ENCODE measurements at regions of chr16 and their contacts with region 1.

Region 1: GRCh38 chr16:66751303-66751991 is at the start of gene DYNC1LI2:
- DNase-seq: peak; percentile 63 to 90 (median 78)
- ATAC-seq: peak; percentile 96
- H3K4me3 ChIP-seq: peak within 1 kb of the TSS; percentile 70 to 90
- H3K4me3 Mint-ChIP-seq: peak within 1 kb of the TSS; percentile 87
- H3K27ac ChIP-seq: peak within 1 kb of the TSS; percentile 67 to 79
- H3K27ac Mint-ChIP-seq: peak within 1 kb of the TSS; percentile 94
- H3K4me1 ChIP-seq: peaks cover 32% of the 10 kb centered on the region
- H3K4me1 Mint-ChIP-seq: peaks cover 43% of the 10 kb centered on the region
- H3K27me3 ChIP-seq: no peaks in the 10 kb centered on the region
- H3K27me3 Mint-ChIP-seq: peaks cover 11% of the 10 kb centered on the region
- CTCF ChIP-seq: peak; percentile 76
- total RNA-seq, gene DYNC1LI2: 102 to 114 TPM

Region 2: DNA sequence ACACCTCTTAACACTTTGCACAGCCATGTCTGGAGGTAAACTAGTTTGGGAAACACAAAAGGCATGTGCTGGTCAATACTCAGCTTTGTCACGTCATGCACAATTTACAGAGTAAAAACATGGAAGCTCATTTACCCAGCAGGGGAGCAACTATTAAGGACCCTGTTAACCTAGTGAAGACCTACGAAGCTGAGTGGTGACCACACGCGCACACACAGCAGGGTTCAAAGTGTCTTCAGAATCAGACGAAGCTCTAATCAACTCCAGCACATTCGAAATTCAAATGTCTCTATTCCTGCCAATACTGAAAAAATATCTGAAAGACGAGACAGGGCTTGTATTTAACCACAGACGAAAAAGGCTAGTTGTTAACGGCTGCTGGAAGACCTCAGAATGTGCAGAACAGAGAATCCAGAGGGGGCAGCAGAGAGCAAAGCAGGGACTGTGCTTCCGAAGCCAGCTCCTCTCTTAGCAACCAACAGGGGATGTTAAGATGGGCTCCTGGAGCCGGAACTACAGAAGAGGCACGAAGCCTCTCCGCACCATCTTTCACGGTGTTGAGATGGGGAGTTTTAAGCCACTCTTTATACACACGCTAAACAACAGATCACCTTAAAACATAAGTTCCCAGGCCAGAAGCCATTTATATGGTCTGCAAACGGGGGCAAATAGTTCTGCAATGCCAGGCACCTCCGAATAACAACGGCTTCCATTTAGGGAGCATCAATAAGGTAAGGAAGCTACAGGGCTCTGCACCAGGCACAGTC is 100.6 kb before region 1 on chr16:
- CTCF ChIA-PET with region 1: interaction called, 8 read pairs
- POLR2A ChIA-PET with region 1: no interaction called
- intact Hi-C with region 1: loop called in 1 of 2 experiments (anchors 5 kb)
- DNase-seq: peak; percentile 65 to 90 (median 82)
- ATAC-seq: peak; percentile 99
- H3K4me3 ChIP-seq: peak overlapping the region; percentile 35
- H3K4me3 Mint-ChIP-seq: peak overlapping the region; percentile 72
- H3K27ac ChIP-seq: no peak overlapping the region
- H3K27ac Mint-ChIP-seq: peak overlapping the region; percentile 55
- H3K4me1 ChIP-seq: peaks cover 9% of the 10 kb centered on the region
- H3K4me1 Mint-ChIP-seq: peaks cover 8% of the 10 kb centered on the region
- H3K27me3 ChIP-seq: no peaks in the 10 kb centered on the region
- H3K27me3 Mint-ChIP-seq: peaks cover 5% of the 10 kb centered on the region
- CTCF ChIP-seq: peak; percentile 94

Region 3: GRCh38 chr16:66696669-66697630 is 54.5 kb before region 1 on chr16 and contains the start of gene CMTM4:
- CTCF ChIA-PET with region 1: interaction called, 3 read pairs
- POLR2A ChIA-PET with region 1: no interaction called
- intact Hi-C with region 1: loop called (anchors 1 to 2 kb)
- DNase-seq: peak; percentile 48 to 90 (median 75)
- ATAC-seq: peak; percentile 96
- H3K4me3 ChIP-seq: peak within 1 kb of the TSS; percentile 69 to 83
- H3K4me3 Mint-ChIP-seq: peak within 1 kb of the TSS; percentile 84
- H3K27ac ChIP-seq: no peak within 1 kb of the TSS
- H3K27ac Mint-ChIP-seq: peak within 1 kb of the TSS; percentile 41
- H3K4me1 ChIP-seq: peaks cover 19% of the 10 kb centered on the region
- H3K4me1 Mint-ChIP-seq: peaks cover 17% of the 10 kb centered on the region
- H3K27me3 ChIP-seq: no peaks in the 10 kb centered on the region
- H3K27me3 Mint-ChIP-seq: peaks cover 5% of the 10 kb centered on the region
- CTCF ChIP-seq: no peak
- total RNA-seq, gene CMTM4: 0.84 to 0.89 TPM

Region 4: GRCh38 chr16:66728117-66728787 is 23.2 kb before region 1 on chr16:
- CTCF ChIA-PET with region 1: interaction called, 26 read pairs
- POLR2A ChIA-PET with region 1: interaction called, 3 read pairs
- intact Hi-C with region 1: loop called in 1 of 2 experiments (anchors 2 kb)
- DNase-seq: peak in 2 of 9 experiments; percentile 49 to 64
- ATAC-seq: peak; percentile 83
- H3K4me3 ChIP-seq: no peak overlapping the region
- H3K4me3 Mint-ChIP-seq: no peak overlapping the region
- H3K27ac ChIP-seq: no peak overlapping the region
- H3K27ac Mint-ChIP-seq: no peak overlapping the region
- H3K4me1 ChIP-seq: no peaks in the 10 kb centered on the region
- H3K4me1 Mint-ChIP-seq: peaks cover 4% of the 10 kb centered on the region
- H3K27me3 ChIP-seq: no peaks in the 10 kb centered on the region
- H3K27me3 Mint-ChIP-seq: no peaks in the 10 kb centered on the region
- CTCF ChIP-seq: peak; percentile 70

Region 5: GRCh38 chr16:66740010-66740409 is 11.4 kb before region 1 on chr16:
- CTCF ChIA-PET with region 1: interaction called, 30 read pairs
- POLR2A ChIA-PET with region 1: interaction called, 3 read pairs
- intact Hi-C with region 1: no loop called
- DNase-seq: peak in 4 of 9 experiments; percentile 27 to 63 (median 44)
- ATAC-seq: peak; percentile 79
- H3K4me3 ChIP-seq: no peak overlapping the region
- H3K4me3 Mint-ChIP-seq: no peak overlapping the region
- H3K27ac ChIP-seq: no peak overlapping the region
- H3K27ac Mint-ChIP-seq: no peak overlapping the region
- H3K4me1 ChIP-seq: no peaks in the 10 kb centered on the region
- H3K4me1 Mint-ChIP-seq: peaks cover 24% of the 10 kb centered on the region
- H3K27me3 ChIP-seq: no peaks in the 10 kb centered on the region
- H3K27me3 Mint-ChIP-seq: no peaks in the 10 kb centered on the region
- CTCF ChIP-seq: peak; percentile 65

Region 6: DNA sequence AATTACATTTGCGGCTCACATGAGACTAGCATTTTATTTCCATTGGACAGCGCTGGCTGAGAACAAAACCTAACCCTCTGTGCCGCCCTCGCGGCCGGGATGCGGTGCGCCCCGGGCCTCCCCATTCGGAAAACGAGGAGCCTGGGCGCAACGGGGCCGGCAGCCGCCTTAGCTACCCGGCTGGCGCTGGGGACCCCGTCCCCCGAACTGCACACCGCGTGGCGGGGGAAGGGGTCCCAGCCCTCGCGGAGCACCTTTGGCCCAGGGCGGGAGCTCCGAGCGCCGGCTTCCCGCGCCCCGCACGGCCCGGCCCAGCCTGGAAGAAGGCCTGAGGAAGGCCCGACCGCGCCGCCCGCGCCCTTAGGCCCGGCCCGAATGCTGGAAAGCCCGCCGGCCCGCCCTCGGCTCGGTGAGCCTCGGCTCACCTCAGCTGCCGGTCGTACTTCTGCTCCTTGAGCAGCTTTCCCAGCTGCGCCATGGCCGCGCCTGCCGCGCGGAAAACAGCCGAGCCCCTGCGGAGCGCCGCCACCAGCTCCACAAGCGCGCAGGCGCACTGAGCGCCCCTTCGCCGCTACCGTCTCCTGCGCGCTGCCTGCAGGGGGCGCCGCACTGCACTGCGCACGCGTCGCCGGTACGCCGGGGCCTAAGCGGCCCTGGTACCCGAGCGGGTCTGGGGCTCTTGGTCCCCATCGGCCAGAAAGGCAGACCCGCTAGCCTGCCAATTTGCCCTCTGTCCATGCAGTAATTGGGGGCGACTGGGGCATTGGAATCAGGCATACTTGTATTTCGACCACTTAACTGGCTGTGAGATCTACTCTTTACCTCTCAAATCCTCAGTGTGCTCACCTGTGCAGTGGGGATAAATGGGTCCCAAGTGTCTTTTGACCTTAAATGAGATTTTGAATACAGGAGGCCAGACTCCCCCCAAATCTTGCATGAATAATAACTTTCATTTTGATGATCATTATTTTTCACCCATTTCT is 79.3 kb after region 1 on chr16 and contains the start of gene NAE1:
- CTCF ChIA-PET with region 1: interaction called, 6 read pairs
- POLR2A ChIA-PET with region 1: interaction called, 9 read pairs
- intact Hi-C with region 1: loop called (anchors 2 to 5 kb)
- DNase-seq: peak; percentile 78 to 95 (median 88)
- ATAC-seq: peak; percentile 97
- H3K4me3 ChIP-seq: peak within 1 kb of the TSS; percentile 66 to 82
- H3K4me3 Mint-ChIP-seq: peak within 1 kb of the TSS; percentile 77
- H3K27ac ChIP-seq: peak within 1 kb of the TSS in 1 of 2 experiments; percentile 72
- H3K27ac Mint-ChIP-seq: peak within 1 kb of the TSS; percentile 45
- H3K4me1 ChIP-seq: peaks cover 18% of the 10 kb centered on the region
- H3K4me1 Mint-ChIP-seq: peaks cover 34% of the 10 kb centered on the region
- H3K27me3 ChIP-seq: no peaks in the 10 kb centered on the region
- H3K27me3 Mint-ChIP-seq: peaks cover 2% of the 10 kb centered on the region
- CTCF ChIP-seq: peak; percentile 98
- total RNA-seq, gene NAE1: 91.9 to 95.9 TPM